ENCODE measurements at regions of chr3 and their contacts with region 1.

Region 1: DNA sequence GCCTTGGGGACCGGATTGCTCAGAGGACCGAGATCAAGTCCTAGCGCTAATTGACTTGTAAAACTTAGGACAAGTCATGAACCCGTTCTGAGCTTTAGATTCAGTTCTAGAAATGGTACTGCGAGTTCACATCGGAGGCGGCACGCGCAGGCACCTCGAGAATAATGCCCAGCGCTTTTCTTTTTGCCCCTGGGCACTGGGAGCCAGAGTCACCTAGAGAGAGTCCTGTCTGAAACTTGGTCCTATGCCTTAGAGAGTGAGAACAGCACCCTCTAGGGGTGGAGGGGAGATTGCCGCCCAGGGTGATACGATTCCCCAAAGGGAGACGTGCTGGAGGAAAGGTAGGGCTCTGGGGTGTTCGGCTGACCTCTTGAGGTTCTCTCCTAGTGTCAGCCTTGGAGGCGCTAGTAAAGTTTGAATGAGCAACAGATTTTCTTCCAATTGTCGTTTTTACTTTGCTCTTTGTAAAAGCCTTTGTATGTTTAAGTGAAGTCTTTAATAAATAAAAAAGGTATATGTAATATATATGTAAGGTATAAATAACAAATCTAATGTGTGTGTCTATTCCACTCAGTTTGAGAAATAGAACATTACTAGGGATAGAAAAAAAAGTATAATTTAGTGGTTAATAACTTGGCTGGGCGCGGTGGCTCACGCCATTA is 826 bp downstream of the EEF1AKMT4 start:
- DNase-seq: peak; percentile 85
- ATAC-seq: peak; percentile 88
- H3K4me3 ChIP-seq: peak overlapping the region; percentile 82
- H3K27ac ChIP-seq: peak overlapping the region; percentile 91
- H3K4me1 ChIP-seq: no peaks in the 10 kb centered on the region
- H3K27me3 ChIP-seq: no peaks in the 10 kb centered on the region
- CTCF ChIP-seq: peak; percentile 96 to 97 (median 96)
- EP300 ChIP-seq: no peak
- POLR2A ChIP-seq: no peak
- RAD21 ChIP-seq: peak; percentile 79

Region 2: DNA sequence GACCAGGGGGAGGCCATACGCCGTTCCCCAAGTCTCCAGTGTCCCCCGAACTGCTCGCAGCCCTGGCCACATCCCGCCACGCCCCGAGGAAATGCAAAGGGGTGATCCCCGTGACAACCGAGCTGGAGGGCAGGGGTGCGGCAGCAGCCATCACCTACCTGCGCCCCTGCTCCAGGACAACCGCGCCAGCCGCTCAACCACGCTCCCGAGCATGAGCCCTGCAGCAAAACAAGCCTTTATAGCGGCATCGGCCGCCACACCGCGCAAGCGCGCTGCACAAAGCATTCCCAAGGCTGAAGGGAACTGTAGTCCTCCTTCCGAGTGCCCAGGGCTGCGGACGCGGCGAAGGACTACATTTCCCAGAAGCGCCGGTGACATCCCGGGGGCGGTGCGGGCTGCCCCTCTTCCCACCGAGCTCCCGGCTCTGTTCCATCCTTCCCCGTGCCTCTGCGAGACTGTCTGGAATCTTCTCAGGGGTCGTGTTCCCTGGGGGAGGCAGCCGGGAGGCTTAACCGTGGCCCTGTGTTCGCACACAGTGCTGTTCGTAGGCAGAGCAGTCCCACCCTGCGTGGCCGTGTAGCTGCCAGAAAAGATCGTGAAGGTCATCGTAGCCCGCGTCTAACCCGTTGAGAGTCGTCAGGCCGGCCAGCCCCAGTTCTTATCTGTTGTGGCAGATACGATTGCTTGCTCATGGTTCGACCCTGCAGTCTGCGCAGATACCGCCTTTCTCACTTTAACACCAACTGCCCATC is 232.4 kb before region 1 on chr3 and contains the start of gene ABCC5:
- CTCF ChIA-PET with region 1: interaction called, 4 read pairs
- POLR2A ChIA-PET with region 1: no interaction called
- RAD21 ChIA-PET with region 1: interaction called, 6 read pairs
- SMC1A ChIA-PET with region 1: no interaction called
- in situ Hi-C with region 1: no loop called
- intact Hi-C with region 1: loop called (anchors 10 kb)
- DNase-seq: peak; percentile 67
- ATAC-seq: peak; percentile 98
- H3K4me3 ChIP-seq: peak within 1 kb of the TSS; percentile 97
- H3K27ac ChIP-seq: no peak within 1 kb of the TSS; the same call in 1 of the 2 replicates
- H3K4me1 ChIP-seq: peaks cover 6% of the 10 kb centered on the region
- H3K27me3 ChIP-seq: no peaks in the 10 kb centered on the region
- CTCF ChIP-seq: no peak
- EP300 ChIP-seq: no peak
- POLR2A ChIP-seq: peak; percentile 65
- RAD21 ChIP-seq: no peak
- polyA plus RNA-seq, gene ABCC5: 6.1 to 7.2 TPM

Region 3: GRCh38 chr3:184185461-184186308 is 64.6 kb before region 1 on chr3 and contains the start of gene ABCF3:
- CTCF ChIA-PET with region 1: no interaction called
- POLR2A ChIA-PET with region 1: interaction called, 3 read pairs
- RAD21 ChIA-PET with region 1: interaction called, 3 read pairs
- SMC1A ChIA-PET with region 1: no interaction called
- in situ Hi-C with region 1: no loop called
- intact Hi-C with region 1: loop called (anchors 2 kb)
- DNase-seq: peak; percentile 97
- ATAC-seq: peak; percentile 98
- H3K4me3 ChIP-seq: peak within 1 kb of the TSS; percentile 93
- H3K27ac ChIP-seq: peak within 1 kb of the TSS; percentile 73
- H3K4me1 ChIP-seq: 0 out of 2 replicates have a peak, but pooled peaks cover 4% of the 10 kb centered on the region
- H3K27me3 ChIP-seq: no peaks in the 10 kb centered on the region
- CTCF ChIP-seq: no peak
- EP300 ChIP-seq: no peak
- POLR2A ChIP-seq: peak; percentile 89
- RAD21 ChIP-seq: no peak
- polyA plus RNA-seq, gene ABCF3: 6.1 to 8.1 TPM

Region 4: DNA sequence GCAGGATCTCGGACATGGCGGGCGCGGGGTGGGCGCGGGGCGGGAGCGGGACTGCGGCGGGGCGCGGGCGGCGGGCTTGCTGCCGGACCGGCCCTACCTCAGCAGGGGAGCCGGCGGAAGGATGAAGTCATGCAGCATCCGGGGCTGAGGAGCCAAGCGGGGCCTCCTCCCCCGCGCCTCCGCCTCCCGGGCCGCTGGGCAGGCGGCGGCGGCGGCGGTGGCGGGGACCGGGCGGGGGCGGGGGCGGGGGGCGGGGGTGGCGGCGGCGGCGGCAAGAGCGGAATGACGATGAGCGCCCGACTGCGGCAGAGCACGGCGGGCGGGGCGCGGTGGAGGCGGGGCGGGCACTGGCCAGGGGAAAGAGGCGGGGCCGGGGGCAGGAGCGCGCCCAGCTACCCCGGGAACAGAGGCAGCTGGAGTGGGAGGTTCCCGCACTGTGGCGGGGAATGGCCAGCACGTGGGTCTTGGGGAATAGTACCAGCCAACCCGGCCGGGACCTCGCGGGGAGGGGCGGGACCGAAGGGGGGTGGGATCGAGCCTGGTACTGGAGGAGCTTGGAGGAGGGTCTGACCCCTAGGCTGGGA is 11.1 kb after region 1 on chr3 and contains the start of gene CAMK2N2:
- CTCF ChIA-PET with region 1: interaction called, 15 read pairs
- POLR2A ChIA-PET with region 1: no interaction called
- RAD21 ChIA-PET with region 1: no interaction called
- SMC1A ChIA-PET with region 1: interaction called, 3 read pairs
- in situ Hi-C with region 1: no loop called
- intact Hi-C with region 1: no loop called
- DNase-seq: no peak
- ATAC-seq: peak; percentile 81
- H3K4me3 ChIP-seq: peak within 1 kb of the TSS; percentile 67; the same call in 1 of the 2 replicates
- H3K27ac ChIP-seq: no peak within 1 kb of the TSS
- H3K4me1 ChIP-seq: 0 out of 2 replicates have a peak, but pooled peaks cover 4% of the 10 kb centered on the region
- H3K27me3 ChIP-seq: peaks cover 2 to 11% of the 10 kb centered on the region in 2 experiments
- CTCF ChIP-seq: no peak
- EP300 ChIP-seq: no peak
- POLR2A ChIP-seq: no peak
- RAD21 ChIP-seq: no peak
- polyA plus RNA-seq, gene CAMK2N2: 0.06 to 0.24 TPM

Measured in GM12878 (cell line).